WTC11 (cell line): ENCODE measurements at regions of chr12 and their contacts with region 1.

Region 1: GRCh38 chr12:32106517-32107358 is at the start of gene BICD1:
- DNase-seq: peak; percentile 88
- ATAC-seq: peak; percentile 85
- H3K4me3 Mint-ChIP-seq: peak within 1 kb of the TSS; percentile 97
- H3K27ac Mint-ChIP-seq: peak within 1 kb of the TSS; percentile 97
- H3K4me1 Mint-ChIP-seq: peaks cover 38% of the 10 kb centered on the region
- H3K27me3 Mint-ChIP-seq: no peaks in the 10 kb centered on the region
- CTCF ChIP-seq: no peak
- total RNA-seq, gene BICD1: 56.7 to 69.4 TPM (median 58.4 TPM) in 3 replicates

Region 2: DNA sequence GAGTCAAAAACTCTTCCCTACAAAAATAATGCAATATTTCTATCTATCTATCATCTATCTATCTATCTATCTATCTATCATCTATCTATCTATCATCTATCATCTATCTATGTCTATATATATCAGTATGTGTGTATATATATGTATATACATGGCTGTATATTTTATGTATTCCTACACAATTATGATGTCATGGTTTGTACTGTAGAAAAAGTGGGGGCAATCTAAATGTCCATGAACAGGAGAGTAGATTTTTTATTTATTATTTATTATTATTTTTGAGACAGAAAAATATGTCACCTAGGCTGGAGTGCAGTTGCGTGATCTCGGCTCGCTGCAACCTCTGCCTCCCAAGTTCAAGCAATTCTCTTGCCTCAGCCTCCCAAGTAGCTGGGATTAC is 45.7 kb before region 1 on chr12:
- CTCF ChIA-PET with region 1: interaction called, 10 read pairs
- POLR2A ChIA-PET with region 1: no interaction called
- DNase-seq: no peak
- ATAC-seq: no peak
- H3K4me3 Mint-ChIP-seq: no peak overlapping the region
- H3K27ac Mint-ChIP-seq: no peak overlapping the region
- H3K4me1 Mint-ChIP-seq: peaks cover 24% of the 10 kb centered on the region
- H3K27me3 Mint-ChIP-seq: no peaks in the 10 kb centered on the region; the same call in 1 of the 2 replicates
- CTCF ChIP-seq: no peak